Heart right ventricle (tissue), 16 donors: ENCODE measurements at regions of chr1 and their contacts with region 1.

Region 1: DNA sequence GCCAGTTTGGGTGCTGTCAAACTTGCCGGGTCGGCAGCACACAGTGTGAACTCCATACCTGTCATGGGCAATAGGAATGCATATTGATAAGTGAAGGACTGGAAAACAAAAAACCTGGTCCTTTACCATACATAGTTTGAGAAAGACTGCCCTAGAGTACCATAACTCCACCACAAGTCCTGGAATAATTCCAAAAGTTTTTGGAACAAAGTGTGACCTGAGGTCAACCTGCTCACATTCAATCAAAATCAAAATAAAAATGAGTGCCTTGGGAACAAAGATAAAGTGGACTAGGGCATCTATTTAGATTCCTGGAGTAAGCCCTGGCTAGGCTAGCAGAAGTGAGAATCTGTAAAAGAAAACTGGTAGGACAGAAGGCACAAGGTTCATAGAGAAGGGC is 7.6 kb downstream of the PEX19 start:
- DNase-seq: no peak
- ATAC-seq: peak in 1 of 8 donors; percentile 15
- H3K4me3 ChIP-seq: no peak overlapping the region
- H3K27ac ChIP-seq: no peak overlapping the region
- H3K4me1 ChIP-seq: peaks cover 0 to 9% (median 0%) of the 10 kb centered on the region in 9 donors
- H3K27me3 ChIP-seq: no peaks in the 10 kb centered on the region
- CTCF ChIP-seq: no peak

Region 2: DNA sequence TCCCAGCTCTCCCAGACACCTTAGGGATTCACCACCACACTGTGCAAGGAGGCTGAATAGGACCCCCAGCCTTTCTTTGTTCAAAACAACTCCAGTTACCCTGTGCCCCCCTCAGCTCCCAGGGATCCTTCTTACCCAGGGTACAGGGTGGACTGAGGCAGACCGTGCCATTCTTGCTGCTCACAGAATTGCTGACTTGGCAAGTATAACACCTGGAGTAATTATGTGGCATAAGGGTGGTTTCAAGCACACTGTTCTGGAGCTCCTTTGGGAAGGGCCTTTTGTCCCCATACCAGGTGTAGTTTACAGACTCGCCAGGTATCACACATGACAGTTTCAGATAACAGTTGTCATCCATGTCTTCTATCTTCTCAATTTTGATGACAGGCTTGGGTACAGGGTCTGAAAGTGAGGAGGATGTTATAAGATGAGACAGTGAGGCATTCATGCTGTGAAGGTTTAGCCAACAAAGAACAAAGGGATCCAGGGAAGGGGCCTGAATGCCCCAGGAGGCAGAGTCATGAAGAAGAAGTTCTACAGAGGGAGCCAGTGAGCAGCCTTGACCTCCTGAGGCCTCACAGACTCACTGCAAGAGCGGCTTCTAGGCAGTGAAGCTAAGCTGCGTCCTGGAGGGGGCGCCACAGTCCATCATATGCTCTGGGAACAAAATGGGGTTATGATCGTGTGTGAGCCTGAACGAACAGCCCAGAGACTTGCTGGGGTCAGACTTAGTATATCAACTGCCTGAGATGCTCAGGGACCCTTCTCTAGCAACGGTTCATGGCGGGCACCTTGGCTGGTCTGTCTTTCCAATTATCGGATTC is 403.9 kb after region 1 on chr1:
- intact Hi-C with region 1: loop called in 1 of 10 experiments (anchors 10 kb)
- DNase-seq: peak; percentile 50 to 67
- ATAC-seq: peak in 7 of 8 donors; percentile 34 to 83 (median 70)
- H3K4me3 ChIP-seq: no peak overlapping the region
- H3K27ac ChIP-seq: peak overlapping the region in 1 of 10 donors; percentile 22
- H3K4me1 ChIP-seq: peaks cover 0 to 49% (median 0%) of the 10 kb centered on the region in 9 donors
- H3K27me3 ChIP-seq: peaks cover 0 to 34% (median 7%) of the 10 kb centered on the region in 7 donors
- CTCF ChIP-seq: peak; percentile 9 to 80 (median 52)